B cell (primary cell): ENCODE measurements at regions of chr16 and their contacts with region 1.

Region 1: GRCh38 chr16:50210266-50211038 is 55.9 kb upstream of the ADCY7 start:
- DNase-seq: peak; percentile 59
- ATAC-seq: peak; percentile 77
- H3K4me3 ChIP-seq: no peak overlapping the region
- H3K4me3 Mint-ChIP-seq: peak overlapping the region; percentile 38
- H3K27ac ChIP-seq: peak overlapping the region in 1 of 2 donors; percentile 20
- H3K27ac Mint-ChIP-seq: peak overlapping the region; percentile 67
- H3K4me1 ChIP-seq: peaks cover 17% of the 10 kb centered on the region in 2 donors
- H3K4me1 Mint-ChIP-seq: peaks cover 28% of the 10 kb centered on the region
- H3K27me3 ChIP-seq: no peaks in the 10 kb centered on the region
- H3K27me3 Mint-ChIP-seq: no peaks in the 10 kb centered on the region
- CTCF ChIP-seq: peak; percentile 56

Region 2: GRCh38 chr16:50065624-50066481 is 144.6 kb before region 1 on chr16 and contains the start of gene HEATR3:
- CTCF ChIA-PET with region 1: interaction called, 11 read pairs
- POLR2A ChIA-PET with region 1: no interaction called
- intact Hi-C with region 1: loop called (anchors 2 kb)
- DNase-seq: peak; percentile 95
- ATAC-seq: peak; percentile 86
- H3K4me3 ChIP-seq: peak within 1 kb of the TSS; percentile 39 to 82 (median 75)
- H3K4me3 Mint-ChIP-seq: peak within 1 kb of the TSS; percentile 89
- H3K27ac ChIP-seq: peak within 1 kb of the TSS; percentile 47 to 63
- H3K27ac Mint-ChIP-seq: peak within 1 kb of the TSS; percentile 92
- H3K4me1 ChIP-seq: peaks cover 17 to 20% of the 10 kb centered on the region in 2 donors
- H3K4me1 Mint-ChIP-seq: peaks cover 35% of the 10 kb centered on the region
- H3K27me3 ChIP-seq: no peaks in the 10 kb centered on the region
- H3K27me3 Mint-ChIP-seq: no peaks in the 10 kb centered on the region
- CTCF ChIP-seq: no peak
- total RNA-seq, gene HEATR3: 21.0 and 21.2 TPM in 2 replicates

Region 3: GRCh38 chr16:50281964-50282538 is 71.6 kb after region 1 on chr16:
- CTCF ChIA-PET with region 1: interaction called, 10 read pairs
- POLR2A ChIA-PET with region 1: no interaction called
- intact Hi-C with region 1: loop called (anchors 5 kb)
- DNase-seq: peak; percentile 92
- ATAC-seq: peak; percentile 90
- H3K4me3 ChIP-seq: peak overlapping the region in 4 of 5 experiments; percentile 34 to 54 (median 50)
- H3K4me3 Mint-ChIP-seq: peak overlapping the region; percentile 84
- H3K27ac ChIP-seq: peak overlapping the region; percentile 65 to 93
- H3K27ac Mint-ChIP-seq: peak overlapping the region; percentile 100
- H3K4me1 ChIP-seq: peaks cover 85 to 87% of the 10 kb centered on the region in 2 donors
- H3K4me1 Mint-ChIP-seq: peaks cover 86% of the 10 kb centered on the region
- H3K27me3 ChIP-seq: no peaks in the 10 kb centered on the region
- H3K27me3 Mint-ChIP-seq: no peaks in the 10 kb centered on the region
- CTCF ChIP-seq: no peak

Region 4: GRCh38 chr16:50354629-50355456 is 144.4 kb after region 1 on chr16:
- CTCF ChIA-PET with region 1: interaction called, 142 read pairs
- POLR2A ChIA-PET with region 1: no interaction called
- intact Hi-C with region 1: loop called (anchors 1 kb)
- DNase-seq: peak; percentile 49
- ATAC-seq: peak; percentile 28
- H3K4me3 ChIP-seq: no peak overlapping the region
- H3K4me3 Mint-ChIP-seq: no peak overlapping the region
- H3K27ac ChIP-seq: no peak overlapping the region
- H3K27ac Mint-ChIP-seq: no peak overlapping the region
- H3K4me1 ChIP-seq: no peaks in the 10 kb centered on the region
- H3K4me1 Mint-ChIP-seq: peaks cover 10% of the 10 kb centered on the region
- H3K27me3 ChIP-seq: no peaks in the 10 kb centered on the region
- H3K27me3 Mint-ChIP-seq: no peaks in the 10 kb centered on the region
- CTCF ChIP-seq: peak; percentile 88

Region 5: GRCh38 chr16:50381679-50382440 is 171.4 kb after region 1 on chr16:
- CTCF ChIA-PET with region 1: no interaction called
- POLR2A ChIA-PET with region 1: no interaction called
- intact Hi-C with region 1: no loop called
- DNase-seq: no peak
- ATAC-seq: no peak
- H3K4me3 ChIP-seq: no peak overlapping the region
- H3K4me3 Mint-ChIP-seq: no peak overlapping the region
- H3K27ac ChIP-seq: no peak overlapping the region
- H3K27ac Mint-ChIP-seq: no peak overlapping the region
- H3K4me1 ChIP-seq: no peaks in the 10 kb centered on the region
- H3K4me1 Mint-ChIP-seq: peaks cover 2% of the 10 kb centered on the region
- H3K27me3 ChIP-seq: peaks cover 0 to 9% (median 0%) of the 10 kb centered on the region in 4 experiments
- H3K27me3 Mint-ChIP-seq: peaks cover 11% of the 10 kb centered on the region
- CTCF ChIP-seq: no peak

Region 6: GRCh38 chr16:50437769-50438437 is 227.5 kb after region 1 on chr16:
- CTCF ChIA-PET with region 1: no interaction called
- POLR2A ChIA-PET with region 1: no interaction called
- intact Hi-C with region 1: no loop called
- DNase-seq: no peak
- ATAC-seq: no peak
- H3K4me3 ChIP-seq: no peak overlapping the region
- H3K4me3 Mint-ChIP-seq: no peak overlapping the region
- H3K27ac ChIP-seq: no peak overlapping the region
- H3K27ac Mint-ChIP-seq: no peak overlapping the region
- H3K4me1 ChIP-seq: no peaks in the 10 kb centered on the region
- H3K4me1 Mint-ChIP-seq: no peaks in the 10 kb centered on the region
- H3K27me3 ChIP-seq: peaks cover 0 to 16% (median 9%) of the 10 kb centered on the region in 4 experiments
- H3K27me3 Mint-ChIP-seq: peaks cover 20% of the 10 kb centered on the region
- CTCF ChIP-seq: no peak

Region 7: DNA sequence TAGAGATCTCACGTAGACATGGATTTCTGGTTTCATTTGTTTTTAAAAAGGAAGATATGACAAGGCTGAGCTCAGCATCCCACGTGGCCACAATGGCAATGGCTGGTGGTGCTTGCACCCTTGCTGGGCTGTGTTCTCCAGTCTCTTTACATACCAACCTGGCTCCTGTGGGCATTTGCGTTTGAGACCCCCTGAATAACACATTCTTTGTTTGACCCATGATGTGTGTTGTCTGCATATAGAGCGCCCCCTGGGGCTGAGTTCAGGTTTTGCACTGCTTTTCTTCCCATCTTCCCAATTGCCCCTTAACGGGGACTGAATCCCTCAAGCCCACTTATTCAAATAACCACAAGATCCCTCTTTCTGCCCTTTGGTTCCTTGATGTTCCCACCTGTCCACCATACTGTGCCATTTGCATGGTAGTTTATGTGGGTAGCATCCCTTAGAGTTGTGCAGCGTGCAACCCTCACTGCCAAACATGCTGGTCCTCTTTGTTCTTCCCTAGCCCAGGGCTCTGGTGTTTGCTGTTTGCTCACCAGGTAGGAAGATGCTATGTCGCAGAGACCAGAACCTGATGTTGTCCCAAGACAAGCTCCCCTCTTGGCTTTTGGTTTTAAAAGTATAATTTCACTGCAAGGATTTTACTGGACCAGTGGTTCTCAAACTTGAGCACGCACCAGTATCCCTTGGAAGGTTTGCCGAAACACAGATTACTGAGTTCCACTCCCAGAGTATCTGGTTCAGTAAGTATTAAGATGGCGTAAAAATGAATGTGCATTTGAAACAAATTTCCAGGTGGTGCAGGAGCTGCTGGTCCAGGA is 299.3 kb after region 1 on chr16:
- CTCF ChIA-PET with region 1: no interaction called
- POLR2A ChIA-PET with region 1: no interaction called
- intact Hi-C with region 1: loop called (anchors 2 kb)
- DNase-seq: peak; percentile 15
- ATAC-seq: no peak
- H3K4me3 ChIP-seq: no peak overlapping the region
- H3K4me3 Mint-ChIP-seq: no peak overlapping the region
- H3K27ac ChIP-seq: no peak overlapping the region
- H3K27ac Mint-ChIP-seq: no peak overlapping the region
- H3K4me1 ChIP-seq: no peaks in the 10 kb centered on the region
- H3K4me1 Mint-ChIP-seq: no peaks in the 10 kb centered on the region
- H3K27me3 ChIP-seq: peaks cover 0 to 4% (median 0%) of the 10 kb centered on the region in 4 experiments
- H3K27me3 Mint-ChIP-seq: peaks cover 21% of the 10 kb centered on the region
- CTCF ChIP-seq: peak; percentile 69

Region 8: GRCh38 chr16:50665128-50665878 is 454.9 kb after region 1 on chr16:
- CTCF ChIA-PET with region 1: interaction called, 59 read pairs
- POLR2A ChIA-PET with region 1: no interaction called
- intact Hi-C with region 1: loop called (anchors 1 kb)
- DNase-seq: peak; percentile 81
- ATAC-seq: peak; percentile 71
- H3K4me3 ChIP-seq: peak overlapping the region; percentile 43 to 59 (median 49)
- H3K4me3 Mint-ChIP-seq: peak overlapping the region; percentile 86
- H3K27ac ChIP-seq: peak overlapping the region in 1 of 2 donors; percentile 7
- H3K27ac Mint-ChIP-seq: peak overlapping the region; percentile 79
- H3K4me1 ChIP-seq: peaks cover 10 to 21% of the 10 kb centered on the region in 2 donors
- H3K4me1 Mint-ChIP-seq: peaks cover 25% of the 10 kb centered on the region
- H3K27me3 ChIP-seq: no peaks in the 10 kb centered on the region
- H3K27me3 Mint-ChIP-seq: no peaks in the 10 kb centered on the region
- CTCF ChIP-seq: peak; percentile 93

Region 9: GRCh38 chr16:50806099-50807062 is 595.9 kb after region 1 on chr16:
- CTCF ChIA-PET with region 1: interaction called, 13 read pairs
- POLR2A ChIA-PET with region 1: no interaction called
- intact Hi-C with region 1: loop called (anchors 2 kb)
- DNase-seq: peak; percentile 92
- ATAC-seq: peak; percentile 93
- H3K4me3 ChIP-seq: peak overlapping the region in 4 of 5 experiments; percentile 19 to 53 (median 44)
- H3K4me3 Mint-ChIP-seq: peak overlapping the region; percentile 81
- H3K27ac ChIP-seq: no peak overlapping the region
- H3K27ac Mint-ChIP-seq: peak overlapping the region; percentile 79
- H3K4me1 ChIP-seq: peaks cover 11 to 15% of the 10 kb centered on the region in 2 donors
- H3K4me1 Mint-ChIP-seq: peaks cover 20% of the 10 kb centered on the region
- H3K27me3 ChIP-seq: no peaks in the 10 kb centered on the region
- H3K27me3 Mint-ChIP-seq: peaks cover 15% of the 10 kb centered on the region
- CTCF ChIP-seq: peak; percentile 96